ENCODE measurements at regions of chr16 and their contacts with region 1.

Region 1: DNA sequence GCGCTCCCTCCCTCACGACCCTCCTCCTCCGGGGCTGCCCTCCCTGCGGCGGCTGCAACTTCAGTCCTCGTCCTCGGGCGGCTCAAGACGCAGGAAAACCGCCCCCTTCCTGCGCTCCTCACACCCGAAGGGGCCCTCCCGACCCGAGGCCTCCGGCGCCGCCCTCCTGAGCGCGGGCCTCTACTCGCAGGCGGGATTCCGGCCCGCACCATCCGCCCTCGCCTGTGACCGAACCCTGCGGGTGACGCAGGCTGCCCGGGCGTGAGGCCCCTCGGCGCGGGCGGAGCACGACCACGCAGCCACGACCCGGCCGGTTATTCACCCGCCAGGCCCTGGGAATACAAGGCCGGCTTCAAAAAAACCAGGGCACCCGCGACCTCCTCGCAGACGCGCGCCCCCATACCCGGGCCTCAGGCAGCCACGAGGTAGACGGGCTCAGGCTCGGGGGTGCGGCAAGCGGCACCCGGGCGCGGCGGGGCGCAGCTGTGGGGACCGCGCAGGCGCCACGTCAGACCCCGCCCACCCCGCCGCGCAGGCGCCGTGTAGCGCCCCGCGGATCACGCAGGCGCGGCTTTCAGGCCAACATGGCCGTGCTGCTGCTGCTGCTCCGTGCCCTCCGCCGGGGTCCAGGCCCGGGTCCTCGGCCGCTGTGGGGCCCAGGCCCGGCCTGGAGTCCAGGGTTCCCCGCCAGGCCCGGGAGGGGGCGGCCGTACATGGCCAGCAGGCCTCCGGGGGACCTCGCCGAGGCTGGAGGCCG is at the start of gene SPG7:
- DNase-seq: peak; percentile 75
- ATAC-seq: peak; percentile 70
- H3K4me3 ChIP-seq: peak within 1 kb of the TSS; percentile 75 to 93 (median 83)
- H3K27ac ChIP-seq: peak within 1 kb of the TSS; percentile 88
- H3K4me1 ChIP-seq: peaks cover 57% of the 10 kb centered on the region
- H3K27me3 ChIP-seq: no peaks in the 10 kb centered on the region; a peak in 1 of 5 replicates
- CTCF ChIP-seq: peak; percentile 28; the same call in 1 of the 2 replicates
- EP300 ChIP-seq: 0 out of 4 replicates have a peak, but pooled peaks of 1 of the 2 experiments have one; percentile 18
- POLR2A ChIP-seq: peak; percentile 65 to 94
- RAD21 ChIP-seq: peak; percentile 64
- total RNA-seq, gene SPG7: 63.9 and 136 TPM in 2 replicates

Region 2: DNA sequence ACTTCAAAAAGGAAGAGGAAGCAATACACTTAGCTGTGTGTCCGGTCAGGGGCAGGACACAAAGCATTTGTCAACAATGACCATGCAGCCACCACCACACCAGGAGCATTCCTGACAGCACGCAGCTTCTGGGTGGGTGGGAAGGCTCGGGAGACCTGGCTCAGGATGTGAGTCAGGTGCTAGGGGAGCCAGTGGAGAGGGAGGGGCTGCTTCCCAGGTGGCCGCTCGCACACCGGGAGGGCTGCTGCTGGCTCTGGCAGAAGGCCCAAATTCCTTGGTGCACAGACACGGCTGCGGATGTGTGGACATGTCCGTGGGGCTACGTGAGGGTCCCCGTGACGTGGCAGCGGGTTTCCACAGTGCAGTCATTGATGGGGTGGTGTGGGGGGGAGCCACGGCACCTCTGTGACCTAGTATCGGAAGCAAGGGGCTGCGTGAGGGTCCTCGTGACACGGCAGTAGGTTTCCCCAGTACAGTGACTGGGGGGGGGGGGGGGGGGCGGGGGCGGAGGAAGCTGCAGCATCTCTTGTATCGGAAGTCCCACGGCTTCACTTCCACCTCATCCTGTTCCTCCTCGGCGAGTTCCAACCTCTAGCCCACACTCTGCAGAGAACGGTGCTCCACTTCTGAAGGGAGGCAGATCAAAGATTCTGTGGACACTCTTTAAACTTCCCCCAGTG is 177.7 kb before region 1 on chr16:
- CTCF ChIA-PET with region 1: no interaction called
- POLR2A ChIA-PET with region 1: no interaction called
- in situ Hi-C with region 1: no loop called
- intact Hi-C with region 1: loop called (anchors 5 kb)
- DNase-seq: peak; percentile 84
- ATAC-seq: peak; percentile 84
- H3K4me3 ChIP-seq: peak overlapping the region in 1 of 3 experiments; percentile 30; a peak in 1 of 6 replicates
- H3K27ac ChIP-seq: peak overlapping the region; percentile 42
- H3K4me1 ChIP-seq: peaks cover 84% of the 10 kb centered on the region
- H3K27me3 ChIP-seq: no peaks in the 10 kb centered on the region
- CTCF ChIP-seq: no peak; the same call in 1 of the 2 replicates
- EP300 ChIP-seq: peak in 1 of 2 experiments; percentile 80; a peak in 1 of 4 replicates
- POLR2A ChIP-seq: no peak
- RAD21 ChIP-seq: no peak

Region 3: DNA sequence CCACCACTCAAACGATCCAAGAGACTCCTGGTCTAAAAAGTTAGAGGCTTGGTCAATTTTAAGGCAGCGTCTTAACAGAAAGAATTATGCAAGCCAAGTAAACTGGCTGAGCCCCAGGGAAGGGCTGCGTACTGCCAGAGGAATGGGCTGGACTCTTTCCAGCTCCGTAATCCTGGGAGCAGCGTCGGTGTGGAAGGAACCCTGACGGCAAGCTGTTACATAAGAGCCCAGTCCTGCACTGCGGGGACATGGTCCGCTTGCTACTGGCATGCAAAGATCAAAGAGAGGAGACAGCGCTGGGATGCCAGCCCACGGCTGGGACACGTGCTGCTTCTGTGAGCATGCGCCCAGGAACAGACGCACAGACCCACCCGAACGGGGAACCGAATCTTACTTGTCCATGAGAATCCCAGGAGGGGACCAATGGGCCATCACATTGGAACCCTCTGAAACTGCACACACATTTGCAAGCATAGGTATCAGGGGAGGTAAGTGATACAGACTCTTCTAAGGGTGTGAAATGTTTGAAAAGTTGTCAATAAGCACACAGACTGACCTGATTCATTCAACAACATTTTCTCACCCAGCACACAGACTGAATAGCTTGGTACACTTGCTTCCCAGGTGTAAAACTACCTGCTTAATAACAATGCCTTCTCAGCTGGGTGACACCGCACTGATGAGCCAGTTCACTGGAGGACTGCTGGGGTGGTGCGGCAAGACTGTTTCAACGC is 112.7 kb before region 1 on chr16:
- CTCF ChIA-PET with region 1: no interaction called
- POLR2A ChIA-PET with region 1: interaction called, 3 read pairs
- in situ Hi-C with region 1: no loop called
- intact Hi-C with region 1: loop called (anchors 2 kb)
- DNase-seq: peak; percentile 97
- ATAC-seq: peak; percentile 91
- H3K4me3 ChIP-seq: peak overlapping the region in 1 of 3 experiments; percentile 27; a peak in 2 of 6 replicates
- H3K27ac ChIP-seq: peak overlapping the region; percentile 65
- H3K4me1 ChIP-seq: peaks cover 51% of the 10 kb centered on the region
- H3K27me3 ChIP-seq: no peaks in the 10 kb centered on the region
- CTCF ChIP-seq: peak; percentile 26; the same call in 1 of the 2 replicates
- EP300 ChIP-seq: peak; percentile 92 to 93
- POLR2A ChIP-seq: no peak
- RAD21 ChIP-seq: peak; percentile 58

Region 4: GRCh38 chr16:89476804-89477261 is 31.2 kb before region 1 on chr16:
- CTCF ChIA-PET with region 1: no interaction called
- POLR2A ChIA-PET with region 1: interaction called, 14 read pairs
- in situ Hi-C with region 1: no loop called
- intact Hi-C with region 1: no loop called
- DNase-seq: no peak
- ATAC-seq: no peak
- H3K4me3 ChIP-seq: no peak overlapping the region
- H3K27ac ChIP-seq: no peak overlapping the region
- H3K4me1 ChIP-seq: peaks cover 92% of the 10 kb centered on the region
- H3K27me3 ChIP-seq: no peaks in the 10 kb centered on the region
- CTCF ChIP-seq: no peak
- EP300 ChIP-seq: no peak
- POLR2A ChIP-seq: no peak
- RAD21 ChIP-seq: no peak

Region 5: GRCh38 chr16:89545831-89546574 is 38.0 kb after region 1 on chr16:
- CTCF ChIA-PET with region 1: no interaction called
- POLR2A ChIA-PET with region 1: interaction called, 18 read pairs
- in situ Hi-C with region 1: no loop called
- intact Hi-C with region 1: no loop called
- DNase-seq: peak; percentile 89
- ATAC-seq: peak; percentile 87
- H3K4me3 ChIP-seq: peak overlapping the region; percentile 38 to 72 (median 41)
- H3K27ac ChIP-seq: peak overlapping the region; percentile 87
- H3K4me1 ChIP-seq: peaks cover 35% of the 10 kb centered on the region
- H3K27me3 ChIP-seq: no peaks in the 10 kb centered on the region
- CTCF ChIP-seq: no peak
- EP300 ChIP-seq: no peak
- POLR2A ChIP-seq: peak; percentile 36 to 59; a peak in 3 of 4 replicates
- RAD21 ChIP-seq: no peak

Region 6: GRCh38 chr16:89564476-89565255 is 56.7 kb after region 1 on chr16:
- CTCF ChIA-PET with region 1: no interaction called
- POLR2A ChIA-PET with region 1: interaction called, 12 read pairs
- in situ Hi-C with region 1: no loop called
- intact Hi-C with region 1: loop called (anchors 5 kb)
- DNase-seq: peak; percentile 53
- ATAC-seq: peak; percentile 6
- H3K4me3 ChIP-seq: peak overlapping the region in 1 of 3 experiments; percentile 50; a peak in 1 of 6 replicates
- H3K27ac ChIP-seq: peak overlapping the region; percentile 2
- H3K4me1 ChIP-seq: peaks cover 62% of the 10 kb centered on the region
- H3K27me3 ChIP-seq: peaks cover 0 to 12% of the 10 kb centered on the region in 2 experiments; a peak in 2 of 5 replicates
- CTCF ChIP-seq: peak; percentile 15; the same call in 1 of the 2 replicates
- EP300 ChIP-seq: no peak
- POLR2A ChIP-seq: peak; percentile 17 to 81; a peak in 3 of 4 replicates
- RAD21 ChIP-seq: peak; percentile 7; the same call in 1 of the 2 replicates

Measured in HepG2 (cell line).